ENCODE measurements at regions of chr17 and their contacts with region 1.

Region 1: DNA sequence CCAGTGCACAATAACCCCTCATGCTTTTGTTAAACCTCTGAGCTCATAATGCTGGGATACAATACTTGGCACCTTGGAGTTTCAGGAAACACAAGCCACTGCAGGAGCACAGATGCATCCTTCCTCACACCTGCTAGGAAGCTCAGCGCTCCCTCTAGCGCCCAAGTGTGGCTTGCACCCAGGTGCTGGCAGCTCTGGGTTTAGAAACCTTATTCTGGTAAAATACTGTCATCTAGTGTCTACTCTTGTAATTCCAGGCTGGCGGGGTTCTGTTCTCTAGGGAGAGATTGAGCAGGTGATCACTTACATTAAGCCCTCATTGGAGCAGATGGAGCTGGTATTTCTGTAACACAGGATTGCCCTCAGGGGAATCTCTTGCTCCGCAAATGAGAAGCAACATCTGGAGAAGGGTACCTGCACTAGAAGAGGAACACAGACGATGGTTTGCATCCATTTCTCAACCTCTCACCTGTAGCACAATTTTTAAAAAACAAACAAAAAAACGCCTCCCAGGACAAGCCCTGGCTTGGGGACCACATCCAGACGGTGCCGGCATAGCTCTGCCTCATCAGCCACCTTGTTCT is 1.5 kb downstream of the CCL1 start:
- DNase-seq: peak; percentile 88
- H3K27ac ChIP-seq: no peak overlapping the region
- CTCF ChIP-seq: peak; percentile 99

Region 2: DNA sequence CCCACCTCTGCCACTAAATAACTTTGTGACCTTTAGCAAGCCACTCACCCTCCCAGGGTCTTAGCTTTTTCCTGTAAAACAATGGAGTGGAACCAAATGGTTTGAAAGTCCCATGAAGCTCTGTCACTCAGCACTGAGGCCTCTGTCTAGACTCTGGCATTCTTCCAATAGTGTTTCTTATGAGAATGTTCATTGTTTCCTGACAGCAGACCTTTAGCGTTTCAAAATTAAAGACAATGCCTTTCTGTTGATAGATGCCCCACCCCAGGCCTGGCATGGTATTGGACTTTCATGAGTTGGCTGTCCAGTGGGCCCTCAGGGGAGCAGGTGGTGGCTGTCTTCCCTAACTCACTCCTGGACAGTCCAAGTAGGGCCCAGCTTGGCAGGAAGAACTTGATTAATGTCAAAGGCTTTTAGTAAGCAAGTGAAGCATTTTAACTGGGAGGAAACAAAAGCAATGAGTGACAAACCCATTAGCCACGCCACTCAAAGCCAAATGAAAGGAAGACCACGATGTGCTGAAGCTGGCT is 293.0 kb before region 1 on chr17:
- CTCF ChIA-PET with region 1: no interaction called
- POLR2A ChIA-PET with region 1: no interaction called
- DNase-seq: no peak
- H3K27ac ChIP-seq: no peak overlapping the region
- CTCF ChIP-seq: no peak

Region 3: DNA sequence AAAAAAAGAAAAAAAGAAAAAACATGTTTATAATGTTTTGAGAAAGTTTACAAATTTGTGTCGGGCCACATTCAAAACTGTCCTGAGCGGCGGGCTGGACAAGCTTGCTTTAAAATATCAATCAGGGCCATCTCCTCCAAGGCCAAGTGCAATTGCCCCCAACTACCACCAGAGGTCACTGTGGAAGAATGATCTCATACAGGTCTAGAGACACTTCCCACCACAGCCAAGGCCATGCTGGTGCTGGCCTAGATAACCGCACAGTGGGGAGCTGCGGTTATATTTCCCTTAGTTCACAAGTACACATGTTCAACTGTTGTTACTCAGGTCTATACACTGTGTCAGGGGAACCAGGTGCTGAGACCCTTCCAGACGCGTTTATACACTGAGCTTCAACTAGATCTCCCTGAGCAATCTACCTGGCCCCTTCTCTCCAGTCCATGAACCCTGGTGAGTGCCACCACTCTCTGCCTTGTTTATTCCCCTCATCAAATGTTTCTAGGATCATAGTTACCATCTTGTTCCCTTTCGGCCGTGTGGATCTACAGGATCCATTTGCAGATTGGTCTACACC is 190.2 kb before region 1 on chr17:
- CTCF ChIA-PET with region 1: interaction called, 20 read pairs
- POLR2A ChIA-PET with region 1: no interaction called
- DNase-seq: peak; percentile 56
- H3K27ac ChIP-seq: no peak overlapping the region
- CTCF ChIP-seq: peak; percentile 86

Region 4: DNA sequence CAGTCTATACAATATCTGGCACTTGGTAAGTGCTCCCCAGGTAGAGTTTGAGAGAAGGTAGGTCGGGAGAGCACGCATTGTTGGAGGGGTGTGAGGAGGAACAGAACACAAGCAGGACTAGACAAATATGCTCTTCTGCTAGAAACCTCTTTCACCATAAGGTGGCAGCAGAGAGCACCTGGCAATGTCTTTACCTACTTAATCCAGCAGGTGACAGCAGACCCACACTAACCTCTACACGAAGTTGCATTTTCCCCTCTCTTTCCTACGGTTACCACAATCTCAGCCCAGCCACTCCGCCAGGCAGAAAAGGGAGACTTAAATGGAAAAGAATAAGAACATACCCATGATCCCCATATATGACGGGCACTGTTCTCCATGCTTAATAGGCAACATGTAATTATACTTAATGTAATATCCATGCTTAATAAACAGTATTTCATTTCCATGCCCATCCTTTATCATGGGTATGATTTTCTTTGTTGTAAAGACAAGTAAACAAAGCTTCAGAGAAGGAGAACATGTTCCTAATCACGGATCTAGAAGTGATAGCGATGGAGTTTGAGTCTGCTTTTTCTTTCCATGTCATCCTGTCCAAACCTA is 161.5 kb before region 1 on chr17:
- CTCF ChIA-PET with region 1: interaction called, 106 read pairs
- POLR2A ChIA-PET with region 1: no interaction called
- DNase-seq: peak; percentile 74
- H3K27ac ChIP-seq: no peak overlapping the region
- CTCF ChIP-seq: peak; percentile 99

Region 5: GRCh38 chr17:34306466-34306865 is 55.1 kb before region 1 on chr17:
- CTCF ChIA-PET with region 1: interaction called, 12 read pairs
- POLR2A ChIA-PET with region 1: no interaction called
- DNase-seq: peak; percentile 29
- H3K27ac ChIP-seq: no peak overlapping the region
- CTCF ChIP-seq: no peak

Region 6: DNA sequence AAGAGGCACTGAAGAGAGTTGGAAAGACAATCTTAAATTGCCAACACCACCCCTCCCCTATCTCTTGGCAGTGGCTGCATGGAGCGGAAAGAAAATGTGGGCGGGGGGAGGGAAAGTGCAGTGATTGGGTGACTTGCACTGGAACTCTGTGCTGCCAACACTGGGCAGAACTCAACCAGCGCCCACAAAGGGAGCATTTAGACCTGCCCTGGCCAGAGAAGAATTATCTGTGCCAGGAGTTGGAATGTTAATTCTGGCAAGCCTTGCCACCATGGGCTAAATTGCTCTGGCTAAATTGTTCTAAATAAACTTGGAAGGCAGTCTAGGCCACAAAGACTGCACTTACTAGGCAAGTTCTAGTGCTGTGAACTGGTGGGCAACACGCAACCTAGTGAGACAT is 11.8 kb before region 1 on chr17:
- CTCF ChIA-PET with region 1: interaction called, 10 read pairs
- POLR2A ChIA-PET with region 1: no interaction called
- DNase-seq: no peak
- H3K27ac ChIP-seq: no peak overlapping the region
- CTCF ChIP-seq: no peak